Colonic mucosa (tissue), 4 donors: ENCODE measurements at regions of chr10 and their contacts with region 1.

Region 1: GRCh38 chr10:122051251-122051996 is 62.5 kb downstream of the TACC2 start:
- DNase-seq: peak; percentile 72
- H3K4me3 ChIP-seq: no peak overlapping the region
- H3K27ac ChIP-seq: no peak overlapping the region
- H3K4me1 ChIP-seq: no peaks in the 10 kb centered on the region
- H3K27me3 ChIP-seq: no peaks in the 10 kb centered on the region
- CTCF ChIP-seq: peak; percentile 76

Region 2: DNA sequence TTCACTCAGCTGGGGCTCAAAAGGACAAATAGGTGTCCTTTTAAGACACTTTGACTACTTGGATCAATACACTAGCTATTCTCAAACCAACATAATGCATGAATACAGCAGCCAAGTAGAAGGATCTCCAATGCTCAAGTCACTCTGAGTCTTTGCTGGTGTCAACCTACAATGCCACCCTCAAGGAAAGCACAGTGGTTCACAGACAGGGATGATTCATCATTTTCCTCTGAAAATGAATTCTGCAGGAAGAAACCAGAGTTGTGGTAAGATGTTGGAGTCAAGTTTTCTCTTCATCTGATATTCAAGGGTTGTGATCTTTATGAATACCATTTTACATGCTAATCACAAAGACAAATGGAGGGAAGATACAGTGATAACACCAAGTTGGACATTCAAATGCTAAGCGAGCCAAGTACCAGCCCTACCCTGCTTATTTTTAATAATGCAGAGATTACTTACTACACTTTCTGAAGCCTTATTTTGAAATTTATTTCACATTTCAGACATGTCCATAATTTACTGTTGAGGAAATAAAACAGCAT is 310.1 kb before region 1 on chr10:
- intact Hi-C with region 1: no loop called
- DNase-seq: no peak
- H3K4me3 ChIP-seq: no peak overlapping the region
- H3K27ac ChIP-seq: no peak overlapping the region
- H3K4me1 ChIP-seq: no peaks in the 10 kb centered on the region
- H3K27me3 ChIP-seq: no peaks in the 10 kb centered on the region
- CTCF ChIP-seq: no peak

Region 3: DNA sequence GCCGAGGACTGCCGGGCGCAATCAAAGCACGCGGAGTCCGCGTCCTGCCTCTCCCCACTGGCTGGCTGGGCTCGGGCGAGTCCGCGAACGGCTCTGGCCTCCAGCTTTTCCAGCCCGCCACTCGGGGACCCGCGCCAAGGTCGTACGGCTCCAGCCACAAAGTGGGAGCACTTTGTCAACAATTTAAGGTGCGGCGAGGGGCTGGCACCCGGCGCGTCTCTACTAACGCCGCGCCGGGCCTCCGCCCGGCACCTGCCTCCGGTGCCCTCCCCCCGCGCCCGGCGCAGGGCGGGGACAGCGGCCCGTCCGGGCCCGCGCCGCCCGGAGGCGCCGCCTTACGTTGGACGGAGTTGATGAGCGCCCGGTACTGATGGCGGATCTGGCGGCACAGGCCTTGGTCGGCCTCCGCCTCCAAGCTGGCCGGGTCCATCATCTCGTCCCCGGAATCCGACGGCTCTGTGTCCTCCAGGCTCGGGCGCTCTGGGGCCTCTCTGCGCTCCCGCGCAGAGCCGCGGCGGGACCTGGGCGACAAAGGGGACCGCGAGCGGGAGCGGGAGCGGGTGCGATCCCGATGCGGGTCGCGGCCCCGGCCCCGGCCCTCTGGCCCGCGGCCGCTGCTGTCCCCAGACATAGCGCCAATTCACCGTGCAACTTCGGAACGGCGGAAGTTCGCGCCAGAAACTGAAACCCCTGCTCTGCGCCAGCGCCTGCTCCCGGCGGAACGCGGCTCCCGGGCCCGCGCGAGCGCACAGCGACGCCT is 76.7 kb before region 1 on chr10 and contains the start of gene NSMCE4A:
- intact Hi-C with region 1: loop called (anchors 5 kb)
- DNase-seq: peak; percentile 77
- H3K4me3 ChIP-seq: peak within 1 kb of the TSS; percentile 72
- H3K27ac ChIP-seq: peak within 1 kb of the TSS; percentile 96
- H3K4me1 ChIP-seq: no peaks in the 10 kb centered on the region
- H3K27me3 ChIP-seq: no peaks in the 10 kb centered on the region
- CTCF ChIP-seq: peak; percentile 69
- total RNA-seq, gene NSMCE4A: 55.0 to 63.9 TPM

Region 4: GRCh38 chr10:122112625-122113160 is 61.3 kb after region 1 on chr10:
- intact Hi-C with region 1: loop called (anchors 2 kb)
- DNase-seq: peak; percentile 80
- H3K4me3 ChIP-seq: peak overlapping the region; percentile 84
- H3K27ac ChIP-seq: peak overlapping the region; percentile 99
- H3K4me1 ChIP-seq: no peaks in the 10 kb centered on the region
- H3K27me3 ChIP-seq: no peaks in the 10 kb centered on the region
- CTCF ChIP-seq: peak; percentile 13